Left lung (tissue), 14 donors: ENCODE measurements at regions of chr13 and their contacts with region 1.

Region 1: GRCh38 chr13:39144941-39145533 is 106.8 kb downstream of the NHLRC3 start:
- DNase-seq: peak in 2 of 4 donors; percentile 67 to 83
- ATAC-seq: peak; percentile 64
- H3K4me3 ChIP-seq: no peak overlapping the region
- H3K27ac ChIP-seq: no peak overlapping the region
- H3K4me1 ChIP-seq: peaks cover 0 to 4% of the 10 kb centered on the region in 2 donors
- H3K27me3 ChIP-seq: no peaks in the 10 kb centered on the region
- CTCF ChIP-seq: peak; percentile 55 to 71

Region 2: GRCh38 chr13:39023790-39024189 is 121.2 kb before region 1 on chr13:
- intact Hi-C with region 1: no loop called
- DNase-seq: peak in 1 of 4 donors; percentile 34
- ATAC-seq: peak; percentile 87
- H3K4me3 ChIP-seq: no peak overlapping the region
- H3K27ac ChIP-seq: peak overlapping the region in 1 of 2 donors; percentile 44
- H3K4me1 ChIP-seq: no peaks in the 10 kb centered on the region
- H3K27me3 ChIP-seq: no peaks in the 10 kb centered on the region
- CTCF ChIP-seq: no peak

Region 3: DNA sequence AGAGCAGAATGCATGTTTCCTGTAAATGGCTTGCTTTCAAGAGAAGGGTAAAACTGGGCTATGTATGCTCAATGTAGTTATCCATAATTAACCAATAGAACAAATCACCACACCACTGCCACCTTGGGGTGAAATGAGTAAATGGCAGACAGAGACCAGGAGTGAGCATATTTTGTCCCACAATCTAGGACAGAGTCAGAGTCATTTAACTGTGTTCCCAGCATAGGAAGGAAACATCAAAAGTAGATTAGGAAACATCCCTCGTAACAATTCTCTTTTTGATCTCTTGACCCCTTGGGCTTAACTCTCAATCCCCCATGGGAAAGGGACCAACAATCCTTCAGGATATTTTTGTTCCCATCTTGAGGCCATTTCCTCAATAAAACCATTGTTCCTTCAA is 118.0 kb after region 1 on chr13:
- intact Hi-C with region 1: loop called in 1 of 2 experiments (anchors 10 kb)
- DNase-seq: peak in 1 of 4 donors; percentile 56
- ATAC-seq: peak; percentile 88
- H3K4me3 ChIP-seq: no peak overlapping the region
- H3K27ac ChIP-seq: no peak overlapping the region
- H3K4me1 ChIP-seq: peaks cover 0 to 4% of the 10 kb centered on the region in 2 donors
- H3K27me3 ChIP-seq: no peaks in the 10 kb centered on the region
- CTCF ChIP-seq: peak; percentile 57 to 67

Region 4: GRCh38 chr13:39462428-39462827 is 317.4 kb after region 1 on chr13:
- intact Hi-C with region 1: no loop called
- DNase-seq: peak in 2 of 4 donors; percentile 31 to 52
- ATAC-seq: peak; percentile 93
- H3K4me3 ChIP-seq: no peak overlapping the region
- H3K27ac ChIP-seq: no peak overlapping the region
- H3K4me1 ChIP-seq: peaks cover 0 to 7% of the 10 kb centered on the region in 2 donors
- H3K27me3 ChIP-seq: no peaks in the 10 kb centered on the region
- CTCF ChIP-seq: no peak